ENCODE measurements at regions of chr15 and their contacts with region 1.

Region 1: GRCh38 chr15:50354838-50355618 is at the start of gene GABPB1:
- DNase-seq: peak; percentile 90
- H3K4me3 Mint-ChIP-seq: peak within 1 kb of the TSS; percentile 98
- H3K27ac Mint-ChIP-seq: peak within 1 kb of the TSS; percentile 100
- H3K4me1 Mint-ChIP-seq: peaks cover 50% of the 10 kb centered on the region
- H3K27me3 Mint-ChIP-seq: no peaks in the 10 kb centered on the region
- total RNA-seq, gene GABPB1: 48.2 to 53.5 TPM

Region 2: DNA sequence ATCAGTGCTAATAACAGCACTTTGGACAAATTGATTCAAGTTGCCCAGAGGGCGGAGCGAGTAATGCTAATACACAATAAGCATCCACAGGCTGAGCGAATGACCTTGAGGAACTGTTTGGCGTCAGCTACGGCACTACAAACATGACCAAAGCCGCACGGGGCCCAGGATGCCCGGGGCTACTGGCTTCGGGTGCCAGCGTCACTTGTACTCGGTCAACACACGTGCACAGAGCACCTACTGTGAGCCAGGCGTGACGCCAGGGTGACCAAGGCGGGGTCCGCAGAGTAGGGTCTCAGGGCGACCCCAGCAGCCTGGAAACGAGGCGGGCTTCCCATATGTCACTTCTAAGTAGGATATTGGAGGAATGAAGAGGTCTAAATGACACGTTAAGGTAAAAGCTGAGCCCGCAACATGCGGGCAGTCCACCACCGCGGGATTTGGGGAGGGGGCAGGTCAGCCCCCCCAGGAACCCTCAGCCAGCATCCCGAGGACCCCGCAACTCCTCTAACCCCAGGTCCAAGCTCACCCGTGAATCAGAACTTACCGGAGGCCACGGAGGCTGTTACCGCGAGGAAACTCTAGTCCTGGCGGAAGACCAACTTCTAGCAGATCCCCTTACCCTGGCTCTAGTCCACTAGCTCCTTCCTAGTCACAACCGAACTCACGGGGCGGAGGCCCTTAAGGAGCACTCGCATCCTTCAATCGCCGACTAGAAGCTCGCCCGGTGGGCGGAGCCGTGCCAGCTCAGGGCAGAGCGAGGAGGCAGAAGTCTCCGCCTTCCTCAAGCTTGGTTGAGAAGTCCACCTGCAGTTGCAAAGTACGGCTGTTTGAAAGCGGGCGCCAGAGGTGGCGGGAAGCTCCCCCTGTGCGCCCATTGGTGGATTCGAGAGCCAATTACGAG is 1544.4 kb before region 1 on chr15 and contains the start of gene CEP152:
- CTCF ChIA-PET with region 1: no interaction called
- intact Hi-C with region 1: loop called (anchors 1 kb)
- DNase-seq: peak; percentile 99
- H3K4me3 Mint-ChIP-seq: peak within 1 kb of the TSS; percentile 97
- H3K27ac Mint-ChIP-seq: peak within 1 kb of the TSS; percentile 95
- H3K4me1 Mint-ChIP-seq: peaks cover 35% of the 10 kb centered on the region
- H3K27me3 Mint-ChIP-seq: no peaks in the 10 kb centered on the region
- total RNA-seq, gene CEP152: 55.1 to 62.0 TPM

Region 3: GRCh38 chr15:49620658-49621368 is 734.2 kb before region 1 on chr15 and contains the starts of genes DTWD1 and FAM227B:
- CTCF ChIA-PET with region 1: no interaction called
- intact Hi-C with region 1: loop called (anchors 1 kb)
- DNase-seq: peak; percentile 96
- H3K4me3 Mint-ChIP-seq: peak within 1 kb of the TSS; percentile 88
- H3K27ac Mint-ChIP-seq: peak within 1 kb of the TSS; percentile 91
- H3K4me1 Mint-ChIP-seq: peaks cover 33% of the 10 kb centered on the region
- H3K27me3 Mint-ChIP-seq: no peaks in the 10 kb centered on the region
- total RNA-seq, gene DTWD1: 18.5 to 19.4 TPM
- total RNA-seq, gene FAM227B: 2.0 to 2.8 TPM

Region 4: DNA sequence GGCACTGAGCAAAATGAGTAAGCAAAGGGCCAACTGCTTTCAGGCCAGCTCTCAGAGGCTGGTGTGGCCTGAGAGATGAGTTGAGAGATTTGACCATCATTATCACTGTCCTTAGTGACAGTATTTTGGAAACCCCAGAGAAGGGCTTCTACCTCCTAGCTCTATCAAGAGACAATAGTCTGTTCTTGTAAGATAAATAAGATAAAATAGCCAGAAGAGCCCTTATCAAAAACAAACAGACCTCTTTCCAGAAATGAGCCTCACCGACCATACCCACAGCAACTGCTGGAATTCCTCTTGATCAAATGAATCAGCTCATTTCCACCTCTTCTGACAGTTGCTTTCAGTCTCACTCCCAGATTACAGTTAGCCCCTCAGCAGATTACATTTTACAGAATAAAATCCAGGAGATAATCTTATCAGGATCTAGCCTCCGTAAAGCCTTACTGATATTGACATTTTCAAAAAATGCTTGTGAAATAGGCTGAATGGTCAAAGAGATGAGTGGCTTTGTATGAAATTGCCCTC is 94.0 kb before region 1 on chr15:
- CTCF ChIA-PET with region 1: no interaction called
- intact Hi-C with region 1: loop called (anchors 1 kb)
- DNase-seq: no peak
- H3K4me3 Mint-ChIP-seq: peak overlapping the region; percentile 52
- H3K27ac Mint-ChIP-seq: peak overlapping the region; percentile 98
- H3K4me1 Mint-ChIP-seq: peaks cover 73% of the 10 kb centered on the region
- H3K27me3 Mint-ChIP-seq: no peaks in the 10 kb centered on the region

Region 5: GRCh38 chr15:50424066-50424890 is 69.2 kb after region 1 on chr15 and contains the start of gene USP8:
- CTCF ChIA-PET with region 1: interaction called, 4 read pairs
- intact Hi-C with region 1: loop called (anchors 1 kb)
- DNase-seq: peak; percentile 96
- H3K4me3 Mint-ChIP-seq: peak within 1 kb of the TSS; percentile 94
- H3K27ac Mint-ChIP-seq: peak within 1 kb of the TSS; percentile 92
- H3K4me1 Mint-ChIP-seq: peaks cover 30% of the 10 kb centered on the region
- H3K27me3 Mint-ChIP-seq: no peaks in the 10 kb centered on the region
- total RNA-seq, gene USP8: 31.6 TPM

Region 6: DNA sequence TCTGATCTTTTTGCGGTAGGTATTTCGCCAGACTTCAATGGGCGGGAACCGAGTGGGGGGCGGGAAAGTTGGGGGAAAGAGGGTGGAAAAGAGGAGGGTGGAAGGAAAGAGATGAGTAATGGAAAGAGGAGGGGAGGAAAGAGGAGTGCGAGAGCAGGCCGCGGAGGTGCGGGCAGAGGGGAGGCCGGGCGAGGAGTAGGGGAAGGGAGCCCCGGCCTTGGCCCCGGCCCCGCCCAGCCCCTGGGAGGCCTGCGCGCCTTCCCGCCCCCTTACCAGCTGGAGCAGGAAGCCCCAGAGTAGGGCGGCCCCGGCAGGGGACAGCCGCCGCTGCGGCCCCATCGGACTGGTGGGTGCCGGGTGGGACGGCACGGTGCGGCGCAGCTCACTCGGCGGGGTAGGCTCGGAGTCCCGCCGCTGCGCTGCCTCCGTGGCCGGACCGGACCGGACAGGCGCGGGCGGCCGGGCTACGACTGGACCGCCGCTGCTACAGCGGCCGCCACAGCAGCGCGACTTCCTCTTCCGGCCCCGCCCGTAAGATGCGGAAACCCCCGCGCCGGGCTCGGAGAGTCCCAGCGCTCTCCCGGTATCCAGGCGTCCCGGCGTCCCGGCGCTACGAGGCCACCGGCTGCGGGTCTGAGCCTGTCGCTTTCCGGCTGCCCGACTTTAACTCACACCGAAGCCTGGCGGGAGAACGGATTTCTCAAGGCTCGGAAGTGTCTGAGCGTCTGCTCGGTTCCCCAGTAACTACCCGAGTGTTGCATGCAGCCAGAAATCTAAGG is 410.4 kb after region 1 on chr15 and contains the start of gene SPPL2A:
- CTCF ChIA-PET with region 1: no interaction called
- intact Hi-C with region 1: loop called (anchors 1 kb)
- DNase-seq: peak; percentile 93
- H3K4me3 Mint-ChIP-seq: peak within 1 kb of the TSS; percentile 90
- H3K27ac Mint-ChIP-seq: peak within 1 kb of the TSS; percentile 99
- H3K4me1 Mint-ChIP-seq: peaks cover 55% of the 10 kb centered on the region
- H3K27me3 Mint-ChIP-seq: no peaks in the 10 kb centered on the region
- total RNA-seq, gene SPPL2A: 37.7 to 41.6 TPM